MCF 10A (cell line): ENCODE measurements at regions of chr1 and their contacts with region 1.

Region 1: DNA sequence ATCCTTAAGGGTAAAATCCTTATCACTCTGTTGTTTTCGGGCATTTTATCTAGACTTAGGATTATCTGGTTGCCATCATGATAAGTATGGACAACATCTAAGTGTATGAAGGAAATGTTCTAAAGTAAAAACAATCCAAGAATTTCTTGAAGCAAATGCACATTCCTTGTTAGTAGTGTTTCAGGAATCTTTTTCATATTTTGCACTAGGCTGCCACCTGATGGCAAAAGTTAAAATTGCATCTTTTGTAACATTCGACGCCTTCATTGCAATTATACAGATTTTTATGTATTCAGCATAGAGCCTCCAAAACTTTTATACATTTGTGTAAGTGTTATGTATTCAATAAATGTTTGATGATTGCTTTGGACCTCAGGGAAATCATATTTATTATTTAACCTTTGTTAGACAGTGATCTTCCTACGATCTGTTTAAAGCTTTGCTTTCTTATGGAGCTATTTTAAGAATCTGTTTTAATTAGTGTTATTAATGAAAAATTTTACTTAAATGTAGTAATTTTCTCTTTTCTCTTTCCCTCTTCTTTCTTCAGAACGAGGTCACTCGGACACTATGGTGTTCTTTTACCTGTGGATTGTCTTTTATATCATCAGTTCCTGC is 49.4 kb upstream of the KIAA1614 start:
- DNase-seq: peak; percentile 81
- H3K4me3 Mint-ChIP-seq: no peak overlapping the region
- H3K27ac Mint-ChIP-seq: no peak overlapping the region
- H3K4me1 Mint-ChIP-seq: peaks cover 26% of the 10 kb centered on the region
- H3K27me3 Mint-ChIP-seq: no peaks in the 10 kb centered on the region
- CTCF ChIP-seq: peak; percentile 89

Region 2: DNA sequence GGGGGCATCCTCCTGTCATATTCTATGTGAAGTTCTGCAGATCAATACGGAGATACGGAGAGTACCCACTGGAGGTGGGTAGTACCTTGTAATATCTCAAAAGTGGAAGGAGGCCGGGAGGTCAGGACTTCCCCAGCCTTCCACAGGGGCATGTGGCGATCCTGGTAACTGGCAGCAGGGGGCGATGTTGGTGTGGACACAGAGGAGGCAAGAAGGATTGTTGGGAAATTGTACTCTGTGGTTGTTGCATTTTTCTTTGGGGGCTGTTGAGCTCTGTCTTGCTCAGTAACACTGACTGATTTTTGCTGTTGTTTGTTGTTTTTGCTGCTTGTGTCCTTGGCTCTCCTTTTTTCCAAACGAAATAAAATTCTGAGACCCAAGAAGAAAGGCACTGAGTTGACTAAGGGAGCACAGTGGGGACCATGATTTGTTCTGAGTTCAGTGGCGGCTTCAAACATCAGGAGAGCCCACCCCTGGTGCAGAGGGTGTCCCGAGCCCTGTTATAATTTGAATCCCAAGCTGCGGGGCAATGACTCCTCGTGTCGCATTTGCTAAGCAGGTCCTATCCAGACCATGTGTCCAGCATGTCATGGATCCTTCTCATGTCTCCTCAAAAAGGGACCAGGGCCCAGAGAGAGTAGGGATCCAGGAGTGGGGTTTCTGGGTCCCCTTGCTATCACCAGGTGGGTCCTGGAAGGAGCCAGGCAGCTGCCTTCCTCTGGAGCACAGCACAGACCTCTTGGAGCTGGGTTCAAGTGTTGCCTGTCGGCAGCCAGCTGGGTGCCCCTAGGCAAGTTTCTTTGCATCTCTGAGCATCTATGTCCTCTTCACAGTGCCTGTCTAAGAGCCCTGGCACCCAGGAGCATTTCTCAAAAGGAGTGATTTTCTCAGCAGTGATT is 610.4 kb before region 1 on chr1:
- CTCF ChIA-PET with region 1: no interaction called
- POLR2A ChIA-PET with region 1: no interaction called
- intact Hi-C with region 1: loop called (anchors 10 kb)
- DNase-seq: peak; percentile 84
- H3K4me3 Mint-ChIP-seq: no peak overlapping the region
- H3K27ac Mint-ChIP-seq: no peak overlapping the region
- H3K4me1 Mint-ChIP-seq: peaks cover 6% of the 10 kb centered on the region
- H3K27me3 Mint-ChIP-seq: peaks cover 5% of the 10 kb centered on the region
- CTCF ChIP-seq: peak; percentile 97

Region 3: GRCh38 chr1:180291004-180291403 is 572.3 kb before region 1 on chr1:
- CTCF ChIA-PET with region 1: no interaction called
- POLR2A ChIA-PET with region 1: no interaction called
- intact Hi-C with region 1: no loop called
- DNase-seq: peak; percentile 55
- H3K4me3 Mint-ChIP-seq: no peak overlapping the region
- H3K27ac Mint-ChIP-seq: no peak overlapping the region
- H3K4me1 Mint-ChIP-seq: peaks cover 5% of the 10 kb centered on the region
- H3K27me3 Mint-ChIP-seq: no peaks in the 10 kb centered on the region
- CTCF ChIP-seq: no peak

Region 4: GRCh38 chr1:180521474-180522207 is 341.6 kb before region 1 on chr1:
- CTCF ChIA-PET with region 1: interaction called, 253 read pairs
- POLR2A ChIA-PET with region 1: interaction called, 114 read pairs
- intact Hi-C with region 1: loop called (anchors 1 kb)
- DNase-seq: peak; percentile 96
- H3K4me3 Mint-ChIP-seq: peak overlapping the region; percentile 34
- H3K27ac Mint-ChIP-seq: peak overlapping the region; percentile 82
- H3K4me1 Mint-ChIP-seq: peaks cover 61% of the 10 kb centered on the region
- H3K27me3 Mint-ChIP-seq: no peaks in the 10 kb centered on the region
- CTCF ChIP-seq: no peak

Region 5: GRCh38 chr1:180540697-180541594 is 322.3 kb before region 1 on chr1:
- CTCF ChIA-PET with region 1: interaction called, 26 read pairs
- POLR2A ChIA-PET with region 1: interaction called, 6 read pairs
- intact Hi-C with region 1: no loop called
- DNase-seq: peak; percentile 53
- H3K4me3 Mint-ChIP-seq: no peak overlapping the region
- H3K27ac Mint-ChIP-seq: peak overlapping the region; percentile 28
- H3K4me1 Mint-ChIP-seq: peaks cover 10% of the 10 kb centered on the region
- H3K27me3 Mint-ChIP-seq: no peaks in the 10 kb centered on the region
- CTCF ChIP-seq: no peak

Region 6: DNA sequence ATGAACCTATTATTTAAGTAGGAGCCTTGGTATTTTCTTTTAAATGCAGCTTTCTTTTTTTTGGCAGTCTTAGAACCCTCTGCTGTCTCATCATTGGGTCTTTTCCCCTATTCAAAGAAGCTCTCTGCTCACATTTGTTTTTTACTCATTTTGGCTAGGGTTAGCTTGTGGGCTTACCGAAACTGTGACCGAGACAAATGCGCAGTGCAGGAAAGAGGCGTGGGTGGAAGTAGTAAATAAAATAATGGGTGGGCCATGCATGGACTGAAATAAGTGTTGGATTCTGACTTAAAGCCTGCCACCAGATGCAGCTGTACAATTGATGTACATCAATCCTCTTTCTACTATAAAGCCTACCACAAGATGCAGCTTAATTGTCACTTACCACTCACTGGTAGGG is 216.7 kb before region 1 on chr1:
- CTCF ChIA-PET with region 1: interaction called, 15 read pairs
- POLR2A ChIA-PET with region 1: no interaction called
- intact Hi-C with region 1: no loop called
- DNase-seq: no peak
- H3K4me3 Mint-ChIP-seq: no peak overlapping the region
- H3K27ac Mint-ChIP-seq: no peak overlapping the region
- H3K4me1 Mint-ChIP-seq: peaks cover 17% of the 10 kb centered on the region
- H3K27me3 Mint-ChIP-seq: no peaks in the 10 kb centered on the region
- CTCF ChIP-seq: no peak

Region 7: GRCh38 chr1:180851995-180852887 is 11.0 kb before region 1 on chr1:
- CTCF ChIA-PET with region 1: interaction called, 13 read pairs
- POLR2A ChIA-PET with region 1: interaction called, 3 read pairs
- intact Hi-C with region 1: no loop called
- DNase-seq: no peak
- H3K4me3 Mint-ChIP-seq: no peak overlapping the region
- H3K27ac Mint-ChIP-seq: no peak overlapping the region
- H3K4me1 Mint-ChIP-seq: peaks cover 13% of the 10 kb centered on the region
- H3K27me3 Mint-ChIP-seq: no peaks in the 10 kb centered on the region
- CTCF ChIP-seq: no peak